Right ventricle myocardium inferior (tissue), 1 donor: ENCODE measurements at regions of chr6 and their contacts with region 1.

Region 1: GRCh38 chr6:134174672-134175198 is 122.3 kb upstream of the SLC2A12 start:
- DNase-seq: peak; percentile 98
- ATAC-seq: peak; percentile 94

Region 2: GRCh38 chr6:134196568-134197193 is 21.9 kb after region 1 on chr6:
- intact Hi-C with region 1: no loop called
- DNase-seq: no peak
- ATAC-seq: no peak

Region 3: GRCh38 chr6:134340179-134340975 is 165.6 kb after region 1 on chr6:
- intact Hi-C with region 1: loop called (anchors 1 kb)
- DNase-seq: no peak
- ATAC-seq: no peak

Region 4: GRCh38 chr6:134517145-134517658 is 342.5 kb after region 1 on chr6:
- intact Hi-C with region 1: loop called (anchors 2 kb)
- DNase-seq: peak; percentile 85
- ATAC-seq: peak; percentile 95

Region 5: DNA sequence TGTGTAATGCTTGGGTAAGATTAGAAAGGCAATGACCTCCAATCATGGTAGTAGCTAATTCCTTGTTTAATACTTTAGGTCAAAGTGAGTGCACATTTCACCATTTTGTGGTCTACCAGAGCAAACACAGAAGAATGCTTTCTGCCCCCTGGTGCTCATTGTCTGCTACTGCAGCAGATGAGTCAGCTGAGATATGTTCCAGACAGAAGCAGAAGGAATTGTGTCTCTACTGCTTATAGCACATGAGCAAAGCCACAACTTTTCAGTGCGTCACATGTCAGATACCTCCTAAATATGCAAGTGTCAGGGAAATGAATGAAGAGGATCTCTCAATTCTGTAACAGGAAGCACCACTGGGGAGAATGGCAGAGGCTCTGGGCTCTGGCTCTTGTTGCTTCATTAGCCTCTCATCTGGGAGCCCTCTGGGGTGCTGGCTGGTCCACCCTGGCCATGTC is 466.3 kb after region 1 on chr6:
- intact Hi-C with region 1: loop called (anchors 1 kb)
- DNase-seq: peak; percentile 78
- ATAC-seq: peak; percentile 91

Region 6: GRCh38 chr6:134822920-134823709 is 648.4 kb after region 1 on chr6:
- intact Hi-C with region 1: loop called (anchors 1 kb)
- DNase-seq: no peak
- ATAC-seq: peak; percentile 44